Thyroid gland (tissue), 4 donors: ENCODE measurements at regions of chr11 and their contacts with region 1.

Region 1: GRCh38 chr11:125141686-125142535 is 22.6 kb upstream of the PKNOX2 start:
- DNase-seq: peak; percentile 36 to 45
- H3K4me3 ChIP-seq: no peak overlapping the region
- H3K27ac ChIP-seq: no peak overlapping the region
- H3K4me1 ChIP-seq: peaks cover 0 to 6% of the 10 kb centered on the region in 2 donors
- H3K27me3 ChIP-seq: no peaks in the 10 kb centered on the region
- CTCF ChIP-seq: peak; percentile 73 to 96 (median 85)
- POLR2A ChIP-seq: no peak

Region 2: DNA sequence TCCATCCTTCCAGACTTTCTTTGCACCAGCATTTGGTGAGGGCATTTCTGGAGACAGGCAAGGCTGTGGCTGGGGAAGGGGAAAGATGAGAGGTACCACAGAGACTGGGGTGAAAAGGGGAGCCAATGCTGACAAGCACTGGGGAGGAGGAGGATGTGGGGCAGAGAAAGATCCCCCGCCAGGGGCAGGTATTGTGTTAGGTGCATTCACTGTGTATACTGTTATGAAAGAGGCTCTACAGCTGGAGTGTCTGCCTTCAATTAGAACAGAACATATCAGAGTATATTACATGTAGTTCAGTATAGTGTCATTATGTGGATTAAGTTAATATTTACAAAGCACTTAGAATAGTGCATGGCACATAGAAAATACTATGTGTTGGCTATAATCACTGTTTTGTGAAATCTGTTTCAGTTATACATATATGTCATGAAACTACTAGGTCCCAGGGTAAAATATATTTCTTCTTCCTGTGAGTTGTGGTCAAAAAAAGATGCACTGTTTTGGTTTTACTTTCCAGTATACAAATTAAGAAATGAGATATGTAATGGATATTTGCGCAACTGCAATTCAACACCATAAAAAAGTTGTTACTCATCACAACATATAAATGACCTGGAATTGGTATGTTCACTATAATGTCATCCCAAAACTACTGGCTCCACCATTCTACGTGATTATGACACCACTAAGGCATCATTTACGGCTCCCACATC is 350.1 kb before region 1 on chr11:
- intact Hi-C with region 1: no loop called
- DNase-seq: no peak
- H3K4me3 ChIP-seq: no peak overlapping the region
- H3K27ac ChIP-seq: no peak overlapping the region
- H3K4me1 ChIP-seq: peaks cover 24 to 29% of the 10 kb centered on the region in 2 donors
- H3K27me3 ChIP-seq: no peaks in the 10 kb centered on the region
- CTCF ChIP-seq: no peak
- POLR2A ChIP-seq: no peak

Region 3: DNA sequence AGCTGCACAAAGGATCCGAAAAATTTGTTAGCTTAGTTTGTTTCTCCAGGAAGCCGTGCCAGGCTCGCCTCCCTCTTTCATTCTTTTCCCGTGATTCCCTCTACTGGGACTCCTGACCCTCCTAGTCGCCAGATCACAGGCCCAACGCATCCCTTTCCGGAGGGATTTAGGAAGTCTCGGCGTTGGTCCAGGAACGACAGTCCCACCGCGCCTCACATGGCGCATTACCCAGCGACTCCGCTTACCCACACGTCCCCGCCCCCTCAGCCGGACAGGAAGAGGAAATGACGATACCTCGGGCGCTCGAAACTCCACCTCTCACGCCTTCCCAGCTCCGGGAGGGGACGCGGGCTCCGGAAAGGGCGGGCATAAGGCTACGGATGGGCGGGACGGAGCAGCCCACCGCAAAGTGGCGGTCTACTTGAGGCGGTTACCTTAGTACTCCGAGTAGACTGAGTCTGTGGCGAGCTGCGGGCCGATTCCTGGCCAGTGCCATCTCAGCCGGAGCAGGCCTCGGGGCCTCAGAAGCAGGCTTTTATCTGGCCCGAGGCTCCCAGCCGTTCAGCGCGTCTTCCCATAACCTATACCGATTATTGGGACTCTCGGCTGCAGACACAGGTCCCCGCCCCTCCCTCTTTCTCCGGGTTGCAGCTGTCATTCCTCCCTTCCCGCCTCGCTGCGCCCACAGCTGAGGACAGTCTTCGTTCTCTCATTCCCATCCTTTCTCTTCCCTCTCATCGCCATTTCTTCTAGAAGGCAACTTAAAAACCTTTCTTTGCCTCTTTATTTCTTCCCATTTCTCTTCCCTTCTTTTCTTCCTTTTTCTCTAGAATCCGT is 187.9 kb before region 1 on chr11 and contains the start of gene CCDC15:
- intact Hi-C with region 1: loop called (anchors 10 kb)
- DNase-seq: peak; percentile 96 to 97
- H3K4me3 ChIP-seq: peak within 1 kb of the TSS; percentile 13 to 62 (median 48)
- H3K27ac ChIP-seq: peak within 1 kb of the TSS; percentile 6 to 76 (median 64)
- H3K4me1 ChIP-seq: peaks cover 9 to 12% of the 10 kb centered on the region in 2 donors
- H3K27me3 ChIP-seq: no peaks in the 10 kb centered on the region
- CTCF ChIP-seq: no peak
- POLR2A ChIP-seq: peak in 1 of 2 donors; percentile 83
- total RNA-seq, gene CCDC15: 0.33 to 2.8 (median 1.1) TPM

Region 4: DNA sequence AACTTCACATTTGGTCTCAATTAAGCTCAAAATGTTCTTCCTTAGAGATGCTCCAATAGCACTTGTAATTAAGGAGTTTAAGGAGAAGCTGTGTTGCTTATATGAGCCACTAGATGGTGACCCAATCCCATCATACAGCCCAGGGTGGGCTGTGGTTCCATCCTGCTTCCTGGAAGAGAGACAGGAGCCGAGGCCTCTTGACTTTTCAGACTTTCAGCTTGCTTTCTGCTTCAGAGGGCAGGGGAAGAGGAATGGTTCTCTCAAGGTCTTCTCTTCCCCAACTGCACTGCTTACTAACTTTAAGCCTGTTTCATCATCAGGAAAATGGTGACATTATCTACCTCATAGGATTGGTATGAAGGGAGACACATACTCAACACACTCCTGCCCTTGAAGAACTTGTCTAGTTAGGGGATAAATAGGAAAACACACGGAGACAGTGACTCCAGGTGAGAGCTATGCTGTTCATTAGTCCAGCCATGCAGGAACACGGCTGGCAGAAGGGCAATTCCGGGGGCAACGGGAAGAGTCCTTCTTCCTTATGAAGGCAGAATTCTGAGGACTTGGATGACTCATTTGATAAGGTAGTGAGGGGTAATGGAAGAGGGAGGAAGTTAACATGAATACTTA is 50.5 kb before region 1 on chr11:
- intact Hi-C with region 1: loop called (anchors 5 kb)
- DNase-seq: peak; percentile 77
- H3K4me3 ChIP-seq: no peak overlapping the region
- H3K27ac ChIP-seq: peak overlapping the region in 1 of 3 donors; percentile 19
- H3K4me1 ChIP-seq: peaks cover 0 to 7% of the 10 kb centered on the region in 2 donors
- H3K27me3 ChIP-seq: no peaks in the 10 kb centered on the region
- CTCF ChIP-seq: peak in 5 of 6 experiments; percentile 25 to 95 (median 81)
- POLR2A ChIP-seq: no peak